ENCODE measurements at regions of chr1 and their contacts with region 1.

Region 1: DNA sequence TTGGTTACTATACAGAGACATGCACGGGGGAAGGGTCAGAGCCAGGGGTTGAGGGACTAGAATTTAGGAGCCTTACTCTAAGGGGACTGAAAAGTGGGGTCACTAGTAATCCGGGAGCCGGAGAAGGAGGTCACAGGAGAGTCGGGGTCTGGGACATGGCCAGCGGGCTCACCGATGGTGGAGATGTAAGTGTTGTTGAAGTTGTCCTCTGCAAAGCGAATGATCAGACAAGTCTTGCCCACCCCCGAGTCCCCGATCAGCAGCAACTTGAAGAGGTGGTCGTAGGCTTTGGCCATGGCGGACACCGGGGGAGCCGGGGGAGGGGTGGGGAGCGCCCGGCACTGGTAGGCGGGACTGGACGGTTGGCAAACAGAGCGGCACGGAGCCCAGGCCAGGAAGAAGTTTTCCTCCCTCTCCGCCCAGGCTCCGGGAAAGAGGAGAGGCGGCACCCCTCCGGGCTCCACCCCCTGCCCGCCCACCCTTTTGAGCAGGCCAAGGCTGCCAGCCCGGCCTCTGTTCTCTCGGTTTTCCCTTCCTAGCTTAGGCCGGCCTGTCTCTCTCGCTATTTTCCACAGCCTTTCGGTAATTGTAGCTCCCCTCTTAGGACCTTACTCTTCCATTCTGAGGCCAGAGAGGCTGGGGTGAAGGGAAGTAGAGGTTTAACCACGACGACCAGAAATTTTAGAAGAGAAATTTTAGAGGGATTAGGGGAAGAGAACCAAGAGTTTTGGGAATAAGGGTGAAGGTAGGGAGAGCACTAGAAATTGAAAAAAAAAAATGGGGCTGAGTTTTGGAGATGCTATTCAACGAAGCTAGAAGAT is at the start of gene RAB13:
- DNase-seq: peak; percentile 91
- H3K4me3 ChIP-seq: peak within 1 kb of the TSS; percentile 39 to 47 (median 45)
- H3K27ac ChIP-seq: peak within 1 kb of the TSS; percentile 74 to 94 (median 85)
- H3K4me1 ChIP-seq: peaks cover 12 to 24% of the 10 kb centered on the region in 2 donors
- H3K27me3 ChIP-seq: no peaks in the 10 kb centered on the region
- CTCF ChIP-seq: no peak
- POLR2A ChIP-seq: peak in 1 of 2 donors; percentile 46
- total RNA-seq, gene RAB13: 30.6 to 48.2 (median 38.1) TPM

Region 2: DNA sequence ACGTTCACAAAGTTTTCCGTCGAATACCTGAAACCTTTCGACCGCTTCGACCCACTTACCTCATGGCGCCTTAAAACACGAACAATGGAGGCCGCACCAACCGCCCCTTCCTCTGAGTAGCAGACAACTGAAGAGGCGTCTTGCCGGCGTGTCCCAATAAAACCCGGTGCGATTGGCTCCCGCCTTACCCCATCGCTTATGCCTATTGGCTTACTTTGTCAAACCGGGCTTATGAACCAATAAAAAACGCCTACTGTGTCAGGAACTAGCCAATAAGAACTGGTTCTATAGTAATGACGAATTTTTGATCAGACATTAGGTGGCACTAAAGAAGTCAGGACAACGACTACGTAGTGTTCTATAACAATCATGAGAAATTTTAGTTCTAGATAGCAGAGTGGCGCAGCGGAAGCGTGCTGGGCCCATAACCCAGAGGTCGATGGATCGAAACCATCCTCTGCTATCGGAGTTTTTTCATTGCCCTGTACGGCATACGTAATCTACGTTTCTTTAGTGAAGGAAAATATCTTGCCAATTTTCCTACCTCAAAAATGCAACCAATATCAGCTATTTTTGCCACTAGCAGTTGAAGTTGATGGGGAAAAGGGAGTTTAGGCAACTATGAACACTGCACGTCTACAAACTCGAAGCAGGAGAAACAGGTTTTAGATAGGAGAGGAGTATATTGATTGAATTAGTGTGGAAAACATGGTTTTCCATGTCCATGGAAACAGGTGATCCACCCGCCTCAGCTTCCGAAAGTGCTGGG is 315.1 kb before region 1 on chr1 and contains the start of gene ILF2:
- intact Hi-C with region 1: loop called (anchors 10 kb)
- DNase-seq: peak; percentile 97
- H3K4me3 ChIP-seq: peak within 1 kb of the TSS; percentile 72 to 95 (median 80)
- H3K27ac ChIP-seq: peak within 1 kb of the TSS; percentile 73 to 90 (median 84)
- H3K4me1 ChIP-seq: peaks cover 8 to 12% of the 10 kb centered on the region in 2 donors
- H3K27me3 ChIP-seq: no peaks in the 10 kb centered on the region
- CTCF ChIP-seq: peak in 2 of 6 experiments; percentile 5 to 8
- POLR2A ChIP-seq: peak in 1 of 2 donors; percentile 89
- total RNA-seq, gene ILF2: 111 to 167 (median 151) TPM

Region 3: GRCh38 chr1:153796791-153797659 is 189.1 kb before region 1 on chr1:
- intact Hi-C with region 1: loop called (anchors 5 kb)
- DNase-seq: peak; percentile 89 to 92
- H3K4me3 ChIP-seq: no peak overlapping the region
- H3K27ac ChIP-seq: no peak overlapping the region
- H3K4me1 ChIP-seq: no peaks in the 10 kb centered on the region
- H3K27me3 ChIP-seq: no peaks in the 10 kb centered on the region
- CTCF ChIP-seq: peak; percentile 74 to 94 (median 88)
- POLR2A ChIP-seq: no peak